Tibial artery (tissue), 4 donors: ENCODE measurements at regions of chr19 and their contacts with region 1.

Region 1: DNA sequence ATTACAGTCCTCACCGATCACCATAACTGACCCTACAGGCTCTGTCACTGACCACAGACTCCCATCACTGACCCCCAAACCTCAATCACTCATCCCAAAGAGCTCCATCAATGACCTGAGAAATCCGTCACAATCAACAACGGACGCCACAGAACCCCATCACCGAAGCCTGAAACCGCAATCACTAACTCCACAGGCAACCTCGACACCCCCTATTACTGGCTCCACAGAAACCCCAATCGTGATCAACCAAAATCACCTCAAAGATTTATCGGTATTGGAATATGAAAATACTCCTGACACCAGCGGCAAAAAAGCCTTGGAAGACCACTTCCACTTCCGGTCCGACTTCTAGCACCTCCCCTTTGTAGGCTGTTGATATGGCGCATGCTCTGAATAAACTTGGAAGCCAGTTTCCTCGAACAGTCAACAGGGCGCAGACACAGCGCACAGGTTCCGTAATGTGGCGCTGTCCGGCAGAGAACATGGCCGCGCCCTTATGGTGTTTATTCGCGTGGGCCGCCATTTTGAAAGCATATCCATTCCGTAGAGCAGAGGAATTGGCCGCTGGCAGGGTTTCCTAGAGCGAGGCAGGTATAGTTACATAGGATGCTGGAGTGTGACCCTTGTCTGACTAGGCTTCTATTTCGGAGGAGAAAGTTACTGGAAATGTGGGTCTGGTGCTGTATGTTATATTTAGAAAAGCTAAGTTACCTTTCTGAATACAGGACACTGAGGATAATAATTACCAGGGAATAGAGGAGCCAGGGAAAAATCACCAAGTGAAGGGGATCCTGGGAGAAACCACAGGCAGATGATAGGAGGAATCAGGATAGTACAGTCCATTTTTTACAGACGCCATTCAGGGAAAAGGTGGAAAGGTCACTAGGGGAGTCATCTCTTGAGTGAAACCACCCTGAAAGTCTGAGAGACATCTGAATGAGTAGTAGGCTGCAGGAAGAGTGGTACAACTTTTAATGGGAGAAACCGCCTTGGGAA is at the start of gene ZNF585A:
- DNase-seq: peak; percentile 95
- H3K4me3 ChIP-seq: peak within 1 kb of the TSS; percentile 58 to 70
- H3K27ac ChIP-seq: peak within 1 kb of the TSS; percentile 74 to 75
- H3K4me1 ChIP-seq: peaks cover 0 to 8% (median 0%) of the 10 kb centered on the region in 4 donors
- H3K27me3 ChIP-seq: no peaks in the 10 kb centered on the region
- CTCF ChIP-seq: no peak

Region 2: GRCh38 chr19:36745870-36746269 is 426.8 kb before region 1 on chr19:
- intact Hi-C with region 1: no loop called
- DNase-seq: no peak
- H3K4me3 ChIP-seq: no peak overlapping the region
- H3K27ac ChIP-seq: no peak overlapping the region
- H3K4me1 ChIP-seq: no peaks in the 10 kb centered on the region
- H3K27me3 ChIP-seq: no peaks in the 10 kb centered on the region
- CTCF ChIP-seq: no peak

Region 3: DNA sequence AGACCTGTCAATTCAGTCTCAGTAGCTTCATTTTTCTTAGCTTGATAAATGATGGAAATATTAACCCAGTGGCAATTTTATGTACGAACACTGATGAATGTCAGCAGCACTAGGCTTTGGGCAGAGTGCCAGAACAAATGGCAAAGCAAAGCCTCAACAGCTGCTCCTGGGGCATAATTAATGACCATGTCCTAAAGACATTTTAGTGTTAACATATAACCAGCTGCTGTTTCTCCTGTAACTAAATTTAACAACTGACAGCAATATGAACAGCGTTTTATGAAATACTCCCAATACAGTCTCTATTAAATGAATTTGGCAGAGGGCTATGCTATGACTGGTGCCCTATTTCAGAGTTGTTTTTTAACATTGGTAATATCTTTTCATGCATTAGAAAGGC is 209.4 kb before region 1 on chr19:
- intact Hi-C with region 1: no loop called
- DNase-seq: no peak
- H3K4me3 ChIP-seq: no peak overlapping the region
- H3K27ac ChIP-seq: no peak overlapping the region
- H3K4me1 ChIP-seq: no peaks in the 10 kb centered on the region
- H3K27me3 ChIP-seq: no peaks in the 10 kb centered on the region
- CTCF ChIP-seq: no peak

Region 4: GRCh38 chr19:37197768-37198167 is 25.1 kb after region 1 on chr19:
- intact Hi-C with region 1: no loop called
- DNase-seq: no peak
- H3K4me3 ChIP-seq: no peak overlapping the region
- H3K27ac ChIP-seq: no peak overlapping the region
- H3K4me1 ChIP-seq: no peaks in the 10 kb centered on the region
- H3K27me3 ChIP-seq: no peaks in the 10 kb centered on the region
- CTCF ChIP-seq: no peak

Region 5: GRCh38 chr19:37217855-37218591 is 45.4 kb after region 1 on chr19 and contains the start of gene ZNF383:
- intact Hi-C with region 1: loop called (anchors 5 kb)
- DNase-seq: peak; percentile 89 to 91
- H3K4me3 ChIP-seq: peak within 1 kb of the TSS; percentile 77 to 79
- H3K27ac ChIP-seq: peak within 1 kb of the TSS; percentile 78 to 87
- H3K4me1 ChIP-seq: peaks cover 0 to 25% (median 10%) of the 10 kb centered on the region in 4 donors
- H3K27me3 ChIP-seq: no peaks in the 10 kb centered on the region
- CTCF ChIP-seq: no peak

Region 6: GRCh38 chr19:37389234-37389633 is 216.6 kb after region 1 on chr19:
- intact Hi-C with region 1: no loop called
- DNase-seq: no peak
- H3K4me3 ChIP-seq: no peak overlapping the region
- H3K27ac ChIP-seq: no peak overlapping the region
- H3K4me1 ChIP-seq: no peaks in the 10 kb centered on the region
- H3K27me3 ChIP-seq: no peaks in the 10 kb centered on the region
- CTCF ChIP-seq: no peak